Heart right ventricle (tissue), 16 donors: ENCODE measurements at regions of chr16 and their contacts with region 1.

Region 1: DNA sequence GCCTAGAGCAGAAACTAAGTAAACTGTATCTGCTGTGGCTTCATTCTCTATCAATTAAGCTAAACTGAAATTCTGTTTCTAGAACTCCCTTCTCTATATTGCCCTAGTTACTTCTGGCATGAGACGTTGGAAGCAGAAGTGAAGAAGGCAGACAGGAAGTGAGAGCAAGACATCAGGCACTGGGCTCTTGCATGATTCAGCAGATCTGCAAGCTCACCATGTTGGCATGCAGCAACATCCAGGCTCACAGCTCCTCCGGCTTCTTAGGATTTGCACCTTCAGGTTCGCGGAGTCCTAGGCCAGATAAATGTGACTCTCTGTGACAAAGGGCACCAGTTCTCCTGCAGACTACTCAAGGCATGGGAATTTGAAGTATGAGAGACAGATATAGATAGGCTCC is 148.3 kb downstream of the CDH8 start:
- DNase-seq: peak in 1 of 2 donors; percentile 4
- ATAC-seq: peak in 1 of 8 donors; percentile 55
- H3K4me3 ChIP-seq: no peak overlapping the region
- H3K27ac ChIP-seq: no peak overlapping the region
- H3K4me1 ChIP-seq: no peaks in the 10 kb centered on the region
- H3K27me3 ChIP-seq: no peaks in the 10 kb centered on the region
- CTCF ChIP-seq: no peak

Region 2: GRCh38 chr16:61836804-61837393 is 51.0 kb before region 1 on chr16:
- intact Hi-C with region 1: loop called in 1 of 10 experiments (anchors 10 kb)
- DNase-seq: no peak
- ATAC-seq: no peak
- H3K4me3 ChIP-seq: no peak overlapping the region
- H3K27ac ChIP-seq: no peak overlapping the region
- H3K4me1 ChIP-seq: no peaks in the 10 kb centered on the region
- H3K27me3 ChIP-seq: no peaks in the 10 kb centered on the region
- CTCF ChIP-seq: no peak